ENCODE measurements at regions of chr7 and their contacts with region 1.

Region 1: DNA sequence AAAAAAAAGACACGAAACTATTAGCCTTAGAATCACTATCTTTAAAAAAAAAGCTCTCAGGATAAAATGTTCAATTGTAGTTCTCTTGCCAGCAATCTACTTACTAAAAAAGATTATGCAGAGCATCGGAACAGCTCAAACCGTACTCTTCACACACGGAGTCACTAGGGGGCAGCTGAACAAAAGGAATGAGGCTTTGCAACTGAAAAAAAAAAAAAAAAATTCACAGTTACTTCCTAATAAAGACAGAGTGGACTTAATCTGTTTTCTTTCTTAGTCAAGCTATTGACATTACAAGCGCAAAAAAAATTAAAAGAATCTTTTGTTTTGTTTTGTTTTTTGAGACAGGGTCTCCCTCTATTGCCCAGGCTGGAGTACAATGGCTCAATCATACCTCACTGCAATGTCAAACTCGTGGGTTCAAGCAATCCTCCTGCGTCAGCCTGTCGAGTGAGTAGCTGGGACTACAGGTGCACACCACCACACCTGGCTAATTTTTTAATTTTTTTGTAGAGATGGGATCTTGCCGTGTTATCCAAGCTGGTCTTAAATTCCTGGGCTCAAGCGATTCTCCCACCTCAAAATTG is 11.5 kb downstream of the PMS2 start:
- DNase-seq: peak in 1 of 2 donors; percentile 47
- H3K4me3 ChIP-seq: no peak overlapping the region
- H3K27ac ChIP-seq: peak overlapping the region in 1 of 2 donors; percentile 38
- H3K4me1 ChIP-seq: peaks cover 0 to 4% (median 0%) of the 10 kb centered on the region in 4 donors
- H3K27me3 ChIP-seq: no peaks in the 10 kb centered on the region
- CTCF ChIP-seq: peak; percentile 55 to 64

Region 2: GRCh38 chr7:5743803-5744202 is 253.5 kb before region 1 on chr7:
- intact Hi-C with region 1: no loop called
- DNase-seq: no peak
- H3K4me3 ChIP-seq: no peak overlapping the region
- H3K27ac ChIP-seq: no peak overlapping the region
- H3K4me1 ChIP-seq: peaks cover 0 to 16% (median 0%) of the 10 kb centered on the region in 4 donors
- H3K27me3 ChIP-seq: no peaks in the 10 kb centered on the region
- CTCF ChIP-seq: no peak

Region 3: GRCh38 chr7:6057316-6058129 is 60.2 kb after region 1 on chr7:
- intact Hi-C with region 1: no loop called
- DNase-seq: peak in 1 of 2 donors; percentile 39
- H3K4me3 ChIP-seq: peak overlapping the region; percentile 84 to 93
- H3K27ac ChIP-seq: peak overlapping the region in 1 of 2 donors; percentile 88
- H3K4me1 ChIP-seq: peaks cover 0 to 21% (median 12%) of the 10 kb centered on the region in 4 donors
- H3K27me3 ChIP-seq: no peaks in the 10 kb centered on the region
- CTCF ChIP-seq: no peak

Region 4: GRCh38 chr7:6130007-6130587 is 132.8 kb after region 1 on chr7:
- intact Hi-C with region 1: no loop called
- DNase-seq: no peak
- H3K4me3 ChIP-seq: no peak overlapping the region
- H3K27ac ChIP-seq: no peak overlapping the region
- H3K4me1 ChIP-seq: no peaks in the 10 kb centered on the region
- H3K27me3 ChIP-seq: no peaks in the 10 kb centered on the region
- CTCF ChIP-seq: no peak

Region 5: DNA sequence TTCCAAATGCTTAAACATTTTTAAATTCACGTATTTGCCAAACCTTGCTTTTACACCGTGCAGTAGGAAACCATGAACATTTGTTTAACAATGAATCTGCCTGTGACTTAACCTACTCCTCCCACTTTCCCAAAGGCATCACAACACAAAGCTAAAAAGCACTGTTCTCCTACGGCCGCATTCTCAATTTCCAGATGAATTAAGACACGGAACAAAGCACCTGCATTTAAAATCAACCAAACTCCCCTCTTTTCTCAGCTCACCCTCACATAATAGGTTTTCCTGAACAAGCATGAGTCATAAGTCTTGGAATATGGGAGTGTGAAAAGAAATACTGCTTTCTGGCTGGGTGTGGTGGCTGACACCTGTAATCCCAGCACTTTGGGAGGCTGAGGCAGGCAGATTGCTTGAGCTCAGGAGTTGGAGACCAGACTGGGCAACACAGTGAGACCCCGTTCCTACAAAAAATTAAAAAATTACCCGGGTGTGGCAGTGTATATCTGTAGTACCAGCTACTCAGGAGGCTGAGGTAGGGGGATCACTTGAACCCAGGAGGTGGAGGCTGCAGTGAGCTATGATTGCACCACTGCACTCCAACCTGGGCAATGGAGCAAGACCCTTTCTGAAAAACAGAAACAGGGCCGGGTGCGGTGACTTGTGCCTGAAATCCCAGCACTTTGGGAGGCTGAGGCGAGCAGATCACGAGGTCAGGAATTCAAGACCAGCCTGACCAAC is 326.8 kb after region 1 on chr7:
- intact Hi-C with region 1: loop called (anchors 10 kb)
- DNase-seq: no peak
- H3K4me3 ChIP-seq: no peak overlapping the region
- H3K27ac ChIP-seq: no peak overlapping the region
- H3K4me1 ChIP-seq: peaks cover 0 to 3% (median 0%) of the 10 kb centered on the region in 4 donors
- H3K27me3 ChIP-seq: no peaks in the 10 kb centered on the region
- CTCF ChIP-seq: no peak

Measured in tibial artery (tissue), 4 donors.